ENCODE measurements at regions of chr10 and their contacts with region 1.

Region 1: GRCh38 chr10:11986593-11987216 is 55.9 kb downstream of the UPF2 start:
- DNase-seq: peak; percentile 91
- H3K4me3 Mint-ChIP-seq: no peak overlapping the region
- H3K27ac Mint-ChIP-seq: peak overlapping the region; percentile 60
- H3K4me1 Mint-ChIP-seq: peaks cover 6% of the 10 kb centered on the region
- H3K27me3 Mint-ChIP-seq: no peaks in the 10 kb centered on the region

Region 2: GRCh38 chr10:11782793-11783557 is 203.7 kb before region 1 on chr10:
- intact Hi-C with region 1: loop called (anchors 1 kb)
- DNase-seq: peak; percentile 79
- H3K4me3 Mint-ChIP-seq: no peak overlapping the region
- H3K27ac Mint-ChIP-seq: no peak overlapping the region
- H3K4me1 Mint-ChIP-seq: peaks cover 5% of the 10 kb centered on the region
- H3K27me3 Mint-ChIP-seq: peaks cover 6% of the 10 kb centered on the region

Region 3: DNA sequence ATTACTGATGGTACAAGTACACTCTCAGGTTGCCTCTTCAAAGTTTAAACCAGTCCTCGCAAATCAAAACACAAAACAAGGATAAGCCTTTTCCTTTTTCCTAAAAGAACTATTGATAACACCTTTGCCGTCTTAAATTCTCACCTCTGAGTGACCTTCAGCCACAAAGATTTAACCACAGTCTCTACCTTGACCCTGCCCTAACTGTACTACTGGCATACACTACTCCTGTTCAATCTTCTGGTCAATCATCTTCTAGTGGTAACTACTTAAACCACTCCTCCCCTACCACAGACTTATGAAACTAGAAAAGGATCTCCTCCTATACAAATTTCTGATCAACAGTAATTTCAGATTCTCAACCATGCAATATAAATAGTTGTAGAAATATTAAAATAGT is 40.8 kb after region 1 on chr10:
- intact Hi-C with region 1: loop called (anchors 5 kb)
- DNase-seq: no peak
- H3K4me3 Mint-ChIP-seq: no peak overlapping the region
- H3K27ac Mint-ChIP-seq: no peak overlapping the region
- H3K4me1 Mint-ChIP-seq: peaks cover 24% of the 10 kb centered on the region
- H3K27me3 Mint-ChIP-seq: no peaks in the 10 kb centered on the region

Region 4: GRCh38 chr10:12214763-12215218 is 228.1 kb after region 1 on chr10:
- intact Hi-C with region 1: no loop called
- DNase-seq: peak; percentile 82
- H3K4me3 Mint-ChIP-seq: peak overlapping the region; percentile 68
- H3K27ac Mint-ChIP-seq: peak overlapping the region; percentile 80
- H3K4me1 Mint-ChIP-seq: peaks cover 14% of the 10 kb centered on the region
- H3K27me3 Mint-ChIP-seq: no peaks in the 10 kb centered on the region